Mammary epithelial cell (primary cell): ENCODE measurements at regions of chr1 and their contacts with region 1.

Region 1: DNA sequence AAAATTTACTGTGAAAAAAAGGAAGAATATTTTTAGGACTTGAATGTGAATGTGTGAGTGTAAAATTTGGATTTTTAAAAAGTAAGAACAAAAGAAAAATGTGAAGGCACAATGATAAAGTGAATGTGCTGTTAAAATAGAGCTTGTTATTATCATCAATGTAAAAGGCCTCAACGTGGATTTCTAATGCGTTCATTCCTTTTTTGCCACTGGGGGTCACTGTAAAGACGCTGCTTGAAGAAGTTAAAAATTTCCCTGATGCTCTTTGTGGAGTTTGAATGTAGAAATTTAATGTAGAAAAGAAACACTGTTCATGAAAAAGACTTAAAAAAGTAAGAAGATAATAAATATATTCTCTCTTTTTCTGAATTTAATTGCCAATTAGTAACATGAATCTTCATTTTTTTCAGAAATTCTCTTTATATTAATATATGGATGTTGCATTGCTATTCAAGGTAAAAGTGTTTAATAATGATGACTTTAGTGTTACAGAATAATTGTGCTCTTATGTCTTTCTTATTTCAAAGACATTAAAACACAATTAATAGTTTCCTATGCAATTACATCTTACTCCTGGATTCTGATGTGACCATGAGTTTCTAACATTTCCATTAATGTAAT is 161.5 kb downstream of the DNM3 start:
- DNase-seq: peak; percentile 40
- H3K4me3 ChIP-seq: no peak overlapping the region
- H3K27ac ChIP-seq: no peak overlapping the region
- H3K4me1 ChIP-seq: peaks cover 45% of the 10 kb centered on the region
- H3K27me3 ChIP-seq: no peaks in the 10 kb centered on the region
- CTCF ChIP-seq: peak; percentile 76 to 80

Region 2: GRCh38 chr1:172041742-172042141 is 38.9 kb after region 1 on chr1:
- CTCF ChIA-PET with region 1: no interaction called
- dilution Hi-C with region 1: no loop called
- in situ Hi-C with region 1: no loop called
- intact Hi-C with region 1: loop called (anchors 2 kb)
- DNase-seq: no peak
- H3K4me3 ChIP-seq: no peak overlapping the region
- H3K27ac ChIP-seq: no peak overlapping the region
- H3K4me1 ChIP-seq: peaks cover 19% of the 10 kb centered on the region
- H3K27me3 ChIP-seq: no peaks in the 10 kb centered on the region
- CTCF ChIP-seq: peak; percentile 35 to 49

Region 3: GRCh38 chr1:172069534-172069933 is 66.7 kb after region 1 on chr1:
- CTCF ChIA-PET with region 1: no interaction called
- dilution Hi-C with region 1: no loop called
- in situ Hi-C with region 1: no loop called
- intact Hi-C with region 1: no loop called
- DNase-seq: no peak
- H3K4me3 ChIP-seq: no peak overlapping the region
- H3K27ac ChIP-seq: no peak overlapping the region
- H3K4me1 ChIP-seq: peaks cover 10% of the 10 kb centered on the region
- H3K27me3 ChIP-seq: no peaks in the 10 kb centered on the region
- CTCF ChIP-seq: no peak

Region 4: DNA sequence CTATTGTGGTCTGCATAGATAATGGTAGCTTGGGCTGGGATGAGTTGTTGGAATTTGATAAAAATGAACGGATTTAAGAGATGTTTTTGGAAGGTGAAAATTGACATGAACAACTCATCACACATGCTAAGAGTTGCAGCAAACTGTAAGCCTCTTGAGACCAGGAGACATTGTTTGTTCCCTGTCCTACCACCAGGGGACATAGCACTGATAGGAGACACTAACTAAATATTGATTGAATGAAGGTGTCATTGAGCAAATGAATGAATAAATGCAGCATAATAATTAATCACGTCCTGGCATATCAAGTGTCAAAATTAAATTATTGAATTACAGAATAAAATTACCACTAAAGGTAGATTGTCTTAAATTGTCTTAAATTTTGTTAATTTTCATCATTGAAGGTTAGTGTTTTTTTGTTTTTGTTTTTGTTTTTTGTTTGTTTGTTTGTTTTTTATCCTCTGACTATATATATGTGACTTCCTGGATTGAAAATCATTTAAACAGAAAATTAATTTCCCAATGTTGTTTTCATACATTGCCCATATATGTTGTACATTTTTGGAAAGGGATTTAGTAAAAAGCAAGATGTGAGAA is 132.3 kb after region 1 on chr1:
- CTCF ChIA-PET with region 1: no interaction called
- dilution Hi-C with region 1: no loop called
- in situ Hi-C with region 1: no loop called
- intact Hi-C with region 1: loop called (anchors 5 kb)
- DNase-seq: no peak
- H3K4me3 ChIP-seq: no peak overlapping the region
- H3K27ac ChIP-seq: no peak overlapping the region
- H3K4me1 ChIP-seq: peaks cover 16% of the 10 kb centered on the region
- H3K27me3 ChIP-seq: no peaks in the 10 kb centered on the region
- CTCF ChIP-seq: peak; percentile 39 to 45

Region 5: GRCh38 chr1:172408958-172409357 is 406.1 kb after region 1 on chr1:
- CTCF ChIA-PET with region 1: interaction called, 3 read pairs
- dilution Hi-C with region 1: loop called (anchors 5 kb)
- in situ Hi-C with region 1: loop called in 1 of 2 experiments (anchors 25 kb)
- intact Hi-C with region 1: no loop called
- DNase-seq: no peak
- H3K4me3 ChIP-seq: no peak overlapping the region
- H3K27ac ChIP-seq: no peak overlapping the region
- H3K4me1 ChIP-seq: peaks cover 3% of the 10 kb centered on the region
- H3K27me3 ChIP-seq: no peaks in the 10 kb centered on the region
- CTCF ChIP-seq: no peak

Region 6: GRCh38 chr1:172443626-172444453 is 441.0 kb after region 1 on chr1 and contains the start of gene PIGC:
- CTCF ChIA-PET with region 1: no interaction called
- dilution Hi-C with region 1: no loop called
- in situ Hi-C with region 1: no loop called
- intact Hi-C with region 1: loop called (anchors 1 kb)
- DNase-seq: peak; percentile 73
- H3K4me3 ChIP-seq: peak within 1 kb of the TSS; percentile 84 to 89 (median 89)
- H3K27ac ChIP-seq: peak within 1 kb of the TSS; percentile 74
- H3K4me1 ChIP-seq: peaks cover 27% of the 10 kb centered on the region
- H3K27me3 ChIP-seq: no peaks in the 10 kb centered on the region
- CTCF ChIP-seq: peak; percentile 74 to 94
- total RNA-seq, gene PIGC: 17.7 to 18.3 TPM

Region 7: DNA sequence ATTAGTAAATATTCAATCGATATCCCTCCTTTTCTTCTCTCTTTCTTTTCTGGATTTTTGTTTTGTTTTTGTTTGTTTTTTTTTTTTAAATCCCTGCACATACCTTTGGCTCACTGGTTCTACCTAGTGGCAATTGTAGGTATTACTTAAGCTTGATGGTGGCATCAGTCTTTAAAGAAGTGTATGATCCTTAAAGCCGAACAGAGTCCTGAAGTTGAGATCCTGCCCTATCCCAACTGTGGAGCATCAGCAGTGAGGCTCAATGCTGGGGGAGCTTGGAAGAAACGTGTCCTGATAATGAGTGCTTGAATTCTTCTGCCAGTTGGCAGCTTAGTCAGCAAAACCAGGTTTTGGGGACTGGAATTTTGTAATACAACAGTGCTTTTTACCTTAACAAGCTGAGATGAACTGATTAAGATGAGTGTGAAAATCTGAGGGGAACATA is 716.9 kb after region 1 on chr1:
- CTCF ChIA-PET with region 1: no interaction called
- dilution Hi-C with region 1: no loop called
- in situ Hi-C with region 1: loop called in 1 of 2 experiments (anchors 25 kb)
- intact Hi-C with region 1: no loop called
- DNase-seq: no peak
- H3K4me3 ChIP-seq: peak overlapping the region in 2 of 3 experiments; percentile 12 to 24
- H3K27ac ChIP-seq: peak overlapping the region; percentile 54
- H3K4me1 ChIP-seq: peaks cover 44% of the 10 kb centered on the region
- H3K27me3 ChIP-seq: no peaks in the 10 kb centered on the region
- CTCF ChIP-seq: peak; percentile 65 to 78